BJ (cell line): ENCODE measurements at regions of chr12 and their contacts with region 1.

Region 1: GRCh38 chr12:48957141-48958048 is at the start of gene ARF3:
- DNase-seq: peak; percentile 45
- H3K4me3 ChIP-seq: peak within 1 kb of the TSS; percentile 88
- H3K27me3 ChIP-seq: no peaks in the 10 kb centered on the region
- CTCF ChIP-seq: 0 out of 2 replicates have a peak, but pooled peaks have one; percentile 0
- polyA plus RNA-seq, gene ARF3: 233 and 292 TPM in 2 replicates

Region 2: DNA sequence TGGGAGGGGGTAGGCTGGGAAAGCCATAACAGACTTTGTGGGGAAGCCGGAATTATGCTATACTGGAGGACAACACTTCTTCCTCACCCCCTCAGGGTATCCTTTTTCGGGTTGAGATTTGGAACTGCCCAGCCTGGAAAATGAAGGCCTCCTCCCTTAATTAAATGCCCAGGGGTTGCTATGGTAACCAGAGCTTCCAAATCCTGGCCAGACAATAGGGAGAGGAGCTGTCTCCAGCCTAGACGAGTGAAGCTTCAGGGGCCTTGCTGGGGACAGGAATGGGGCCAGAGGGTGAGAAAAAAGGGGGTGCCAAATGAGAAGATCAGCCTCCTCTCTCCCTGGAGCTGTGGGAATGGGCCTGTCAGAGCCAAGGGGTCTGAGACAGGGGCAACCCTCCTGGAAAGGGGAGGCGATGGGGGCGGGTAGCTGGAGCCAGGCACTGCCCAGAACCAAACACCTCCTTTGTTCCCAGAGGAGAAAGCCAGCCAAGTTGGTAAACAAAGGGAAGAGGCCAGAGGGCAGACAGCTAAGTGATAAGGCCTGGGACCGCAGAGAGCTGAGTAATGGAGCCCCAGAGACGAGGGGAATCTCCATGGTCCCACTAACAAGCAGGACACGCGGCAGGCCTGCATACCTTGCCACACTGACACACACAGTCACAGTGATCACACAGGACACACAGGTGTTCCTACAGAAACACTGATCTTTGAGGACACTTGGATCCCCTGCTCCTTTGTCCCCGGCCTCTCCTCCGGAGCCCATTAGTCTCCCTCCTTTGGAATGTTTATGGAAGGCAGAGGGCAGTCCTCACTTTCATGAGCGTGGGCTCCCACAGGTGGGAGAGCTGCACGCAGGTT is 73.9 kb before region 1 on chr12:
- CTCF ChIA-PET with region 1: no interaction called
- POLR2A ChIA-PET with region 1: no interaction called
- DNase-seq: no peak
- H3K4me3 ChIP-seq: no peak overlapping the region
- H3K27me3 ChIP-seq: peaks cover 6% of the 10 kb centered on the region
- CTCF ChIP-seq: no peak

Region 3: GRCh38 chr12:48936379-48936979 is 20.9 kb before region 1 on chr12:
- CTCF ChIA-PET with region 1: interaction called, 35 read pairs
- POLR2A ChIA-PET with region 1: no interaction called
- DNase-seq: no peak
- H3K4me3 ChIP-seq: no peak overlapping the region
- H3K27me3 ChIP-seq: no peaks in the 10 kb centered on the region
- CTCF ChIP-seq: peak; percentile 95

Region 4: GRCh38 chr12:48988030-48988649 is 30.7 kb after region 1 on chr12:
- CTCF ChIA-PET with region 1: interaction called, 757 read pairs
- POLR2A ChIA-PET with region 1: interaction called, 4 read pairs
- DNase-seq: no peak
- H3K4me3 ChIP-seq: no peak overlapping the region
- H3K27me3 ChIP-seq: peaks cover 37% of the 10 kb centered on the region
- CTCF ChIP-seq: peak; percentile 90

Region 5: DNA sequence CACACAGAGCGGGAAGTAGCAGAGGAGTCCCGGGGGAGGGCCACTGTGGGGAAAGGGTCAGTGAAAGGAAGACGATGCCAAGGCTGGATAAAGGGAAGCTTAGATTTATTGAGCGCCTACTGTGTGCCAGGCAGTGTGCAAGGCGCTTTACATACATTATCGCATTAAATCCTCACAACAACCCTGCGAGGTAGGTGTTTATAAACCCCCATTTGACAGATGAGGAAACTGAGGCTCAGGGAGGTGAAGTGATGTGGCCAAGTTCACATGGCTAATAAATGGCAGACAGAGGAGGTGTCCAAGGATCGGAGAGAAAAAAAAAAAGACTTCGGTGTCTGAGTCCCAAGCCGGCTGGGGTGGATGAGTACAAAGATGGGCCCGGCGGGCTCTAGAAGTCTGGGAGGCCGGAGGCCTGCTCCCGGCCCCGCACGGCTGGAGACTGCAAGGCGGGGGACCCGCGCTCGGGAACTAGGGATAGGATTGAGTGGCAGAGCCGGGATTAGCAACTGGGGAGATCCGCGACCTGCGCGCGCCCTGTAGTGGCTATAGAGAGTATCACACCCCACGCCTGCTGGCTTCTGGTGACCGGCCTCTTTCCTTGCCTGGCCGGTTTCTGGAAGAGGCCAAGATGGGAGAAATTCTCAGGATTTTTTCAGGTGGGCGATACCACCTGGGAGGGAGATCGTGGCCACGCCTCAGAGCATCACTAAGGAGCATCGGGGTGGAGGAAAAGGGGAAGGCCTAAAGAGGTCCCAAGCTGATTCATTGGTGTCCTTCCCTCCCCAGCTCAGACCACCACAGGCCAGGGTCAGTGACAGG is 37.9 kb after region 1 on chr12:
- CTCF ChIA-PET with region 1: interaction called, 757 read pairs
- POLR2A ChIA-PET with region 1: interaction called, 4 read pairs
- DNase-seq: no peak
- H3K4me3 ChIP-seq: no peak overlapping the region
- H3K27me3 ChIP-seq: peaks cover 9% of the 10 kb centered on the region
- CTCF ChIP-seq: peak; percentile 83

Region 6: DNA sequence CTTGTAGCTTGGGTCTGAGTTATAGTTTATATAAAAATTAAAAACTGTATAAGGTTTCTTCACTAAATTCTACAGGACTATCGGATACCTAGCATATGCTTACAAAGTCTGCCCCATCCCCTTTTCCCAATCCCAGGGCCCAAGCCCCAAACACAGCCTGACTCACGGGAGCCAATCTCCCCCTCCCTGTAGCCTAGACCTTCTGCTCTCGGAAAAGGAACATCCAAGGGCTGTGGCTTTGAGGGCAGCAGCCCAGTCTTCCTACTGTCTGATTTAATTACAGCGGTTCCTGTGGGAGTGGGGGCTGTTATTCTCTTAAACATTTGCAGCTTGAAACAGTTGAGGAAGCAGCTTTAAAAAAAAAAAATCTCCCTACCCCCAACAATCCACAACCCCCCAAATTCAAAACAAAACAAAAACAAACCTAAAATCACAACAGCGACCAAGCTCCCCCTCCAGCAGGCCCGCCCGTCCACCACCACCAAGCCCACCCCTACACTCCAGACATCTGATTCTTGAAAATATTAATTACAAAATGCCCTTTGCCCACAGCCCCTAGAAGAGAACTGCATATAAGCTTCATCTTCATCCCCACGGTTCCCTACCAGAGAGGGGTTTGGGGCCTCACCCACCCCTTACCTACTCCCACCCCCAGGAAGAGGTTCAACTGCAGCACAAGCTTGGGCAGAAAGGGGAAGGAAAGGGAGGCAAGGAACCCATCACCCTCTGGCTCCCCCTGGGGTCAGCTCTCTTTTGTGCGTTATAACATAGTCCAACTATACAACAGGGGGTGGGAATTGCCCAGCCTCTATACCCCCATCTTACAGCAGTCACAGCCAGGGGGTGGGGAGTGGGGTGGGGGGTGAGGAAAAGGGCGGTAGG is 62.3 kb after region 1 on chr12:
- CTCF ChIA-PET with region 1: no interaction called
- POLR2A ChIA-PET with region 1: interaction called, 14 read pairs
- DNase-seq: no peak
- H3K4me3 ChIP-seq: no peak overlapping the region
- H3K27me3 ChIP-seq: no peaks in the 10 kb centered on the region
- CTCF ChIP-seq: peak; percentile 53

Region 7: GRCh38 chr12:49086116-49086515 is 128.7 kb after region 1 on chr12:
- CTCF ChIA-PET with region 1: no interaction called
- POLR2A ChIA-PET with region 1: no interaction called
- DNase-seq: peak; percentile 16
- H3K4me3 ChIP-seq: no peak overlapping the region
- H3K27me3 ChIP-seq: peaks cover 12% of the 10 kb centered on the region
- CTCF ChIP-seq: no peak